ENCODE measurements at regions of chr3 and their contacts with region 1.

Region 1: GRCh38 chr3:96863129-96863740 is 48.8 kb downstream of the EPHA6 start:
- DNase-seq: no peak
- ATAC-seq: peak; percentile 75
- H3K4me3 ChIP-seq: no peak overlapping the region
- H3K27ac ChIP-seq: no peak overlapping the region
- H3K4me1 ChIP-seq: no peaks in the 10 kb centered on the region
- H3K27me3 ChIP-seq: no peaks in the 10 kb centered on the region
- CTCF ChIP-seq: peak; percentile 65 to 71 (median 68)
- EP300 ChIP-seq: no peak
- POLR2A ChIP-seq: no peak
- RAD21 ChIP-seq: peak; percentile 77

Region 2: DNA sequence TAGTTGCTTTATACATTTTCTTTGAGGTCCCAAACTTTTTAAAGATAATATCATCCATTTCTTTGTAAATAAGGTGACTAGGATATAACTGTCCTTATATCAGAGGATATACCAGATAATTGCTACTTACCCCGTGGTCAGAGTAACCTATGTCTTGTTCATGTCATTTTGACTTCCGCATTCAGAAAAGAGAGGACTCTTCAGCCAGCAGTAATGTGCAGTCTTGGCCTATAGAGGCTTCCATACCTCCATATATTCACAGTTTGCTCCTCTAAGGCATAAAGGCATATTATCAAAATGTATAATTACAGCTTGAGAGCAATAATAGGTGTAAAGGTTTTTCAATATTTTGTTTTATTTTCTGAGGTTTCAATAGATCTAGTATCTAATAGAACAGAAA is 10.4 kb before region 1 on chr3:
- CTCF ChIA-PET with region 1: interaction called, 12 read pairs
- POLR2A ChIA-PET with region 1: no interaction called
- RAD21 ChIA-PET with region 1: no interaction called
- SMC1A ChIA-PET with region 1: no interaction called
- in situ Hi-C with region 1: no loop called
- intact Hi-C with region 1: no loop called
- DNase-seq: no peak
- ATAC-seq: peak; percentile 53; the same call in 2 of the 3 replicates
- H3K4me3 ChIP-seq: no peak overlapping the region
- H3K27ac ChIP-seq: no peak overlapping the region
- H3K4me1 ChIP-seq: no peaks in the 10 kb centered on the region
- H3K27me3 ChIP-seq: no peaks in the 10 kb centered on the region
- CTCF ChIP-seq: no peak
- EP300 ChIP-seq: no peak
- POLR2A ChIP-seq: no peak
- RAD21 ChIP-seq: no peak

Region 3: GRCh38 chr3:97138914-97139541 is 275.8 kb after region 1 on chr3:
- CTCF ChIA-PET with region 1: no interaction called
- POLR2A ChIA-PET with region 1: no interaction called
- RAD21 ChIA-PET with region 1: no interaction called
- SMC1A ChIA-PET with region 1: no interaction called
- in situ Hi-C with region 1: no loop called
- intact Hi-C with region 1: loop called (anchors 10 kb)
- DNase-seq: no peak
- ATAC-seq: peak; percentile 86
- H3K4me3 ChIP-seq: no peak overlapping the region
- H3K27ac ChIP-seq: no peak overlapping the region
- H3K4me1 ChIP-seq: no peaks in the 10 kb centered on the region
- H3K27me3 ChIP-seq: no peaks in the 10 kb centered on the region
- CTCF ChIP-seq: peak; percentile 3 to 32 (median 17); a peak in 2 of 6 replicates
- EP300 ChIP-seq: no peak
- POLR2A ChIP-seq: no peak
- RAD21 ChIP-seq: 0 out of 2 replicates have a peak, but pooled peaks have one; percentile 8

Region 4: GRCh38 chr3:97658668-97659285 is 795.5 kb after region 1 on chr3:
- CTCF ChIA-PET with region 1: interaction called, 7 read pairs
- POLR2A ChIA-PET with region 1: no interaction called
- RAD21 ChIA-PET with region 1: no interaction called
- SMC1A ChIA-PET with region 1: no interaction called
- in situ Hi-C with region 1: no loop called
- intact Hi-C with region 1: loop called (anchors 2 kb)
- DNase-seq: no peak
- ATAC-seq: peak; percentile 62; the same call in 1 of the 3 replicates
- H3K4me3 ChIP-seq: no peak overlapping the region
- H3K27ac ChIP-seq: no peak overlapping the region
- H3K4me1 ChIP-seq: no peaks in the 10 kb centered on the region
- H3K27me3 ChIP-seq: no peaks in the 10 kb centered on the region
- CTCF ChIP-seq: peak; percentile 53 to 66 (median 55)
- EP300 ChIP-seq: no peak
- POLR2A ChIP-seq: no peak
- RAD21 ChIP-seq: peak; percentile 66

Region 5: GRCh38 chr3:97719156-97719821 is 856.1 kb after region 1 on chr3:
- CTCF ChIA-PET with region 1: interaction called, 21 read pairs
- POLR2A ChIA-PET with region 1: no interaction called
- RAD21 ChIA-PET with region 1: interaction called, 3 read pairs
- SMC1A ChIA-PET with region 1: interaction called, 6 read pairs
- in situ Hi-C with region 1: loop called (anchors 10 kb)
- intact Hi-C with region 1: loop called (anchors 2 kb)
- DNase-seq: peak; percentile 11
- ATAC-seq: peak; percentile 96
- H3K4me3 ChIP-seq: no peak overlapping the region
- H3K27ac ChIP-seq: no peak overlapping the region
- H3K4me1 ChIP-seq: no peaks in the 10 kb centered on the region
- H3K27me3 ChIP-seq: no peaks in the 10 kb centered on the region
- CTCF ChIP-seq: peak; percentile 89 to 94 (median 90)
- EP300 ChIP-seq: no peak
- POLR2A ChIP-seq: no peak
- RAD21 ChIP-seq: peak; percentile 86